GM12878 (cell line): ENCODE measurements at regions of chr3 and their contacts with region 1.

Region 1: DNA sequence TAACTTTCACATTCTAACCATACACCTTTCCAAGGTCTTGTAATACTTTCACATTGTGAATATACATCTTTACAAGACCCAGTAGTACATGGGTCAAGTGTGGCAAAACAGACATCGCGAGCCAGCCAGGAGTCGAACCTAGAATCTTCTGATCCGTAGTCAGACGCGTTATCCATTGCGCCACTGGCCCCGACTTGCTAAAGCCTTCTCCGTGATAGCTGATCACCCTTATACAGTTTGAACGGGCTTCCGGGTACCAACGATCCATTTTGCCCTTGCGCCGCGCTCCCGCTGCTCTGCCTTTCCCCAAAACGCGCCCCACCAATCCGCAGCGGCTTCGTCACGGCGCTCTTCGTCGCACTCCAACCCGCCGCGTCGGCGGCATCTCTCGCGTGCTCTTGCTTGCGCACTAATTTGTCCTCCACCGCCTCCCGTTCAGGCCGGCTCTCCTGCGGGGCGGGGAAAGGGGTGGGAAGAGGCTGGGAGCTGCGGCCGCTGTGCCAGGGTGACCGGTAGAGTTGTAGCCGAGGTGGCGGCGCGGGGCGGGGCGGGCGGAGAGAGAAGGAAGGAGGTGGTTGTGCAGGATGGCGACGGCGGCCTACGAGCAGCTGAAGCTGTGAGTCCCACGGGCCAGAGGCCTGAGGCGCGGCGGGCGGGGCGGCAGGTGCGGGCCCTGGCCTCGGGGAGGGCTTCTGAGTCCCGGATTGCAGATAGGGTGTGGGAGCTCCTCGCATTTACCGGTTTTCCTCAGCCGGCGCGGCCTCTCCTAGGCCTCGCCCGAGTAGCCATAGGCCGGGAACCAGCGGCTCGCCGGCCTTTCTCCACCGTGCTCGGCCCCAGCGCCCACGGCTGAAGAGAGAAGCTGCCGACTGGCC is at the start of gene SACM1L:
- DNase-seq: peak; percentile 99
- ATAC-seq: peak; percentile 86
- H3K4me3 ChIP-seq: peak within 1 kb of the TSS; percentile 88
- H3K27ac ChIP-seq: peak within 1 kb of the TSS; percentile 84
- H3K4me1 ChIP-seq: peaks cover 22% of the 10 kb centered on the region
- H3K27me3 ChIP-seq: no peaks in the 10 kb centered on the region
- CTCF ChIP-seq: no peak
- EP300 ChIP-seq: peak in 1 of 2 experiments; percentile 82; a peak in 1 of 4 replicates
- POLR2A ChIP-seq: peak; percentile 86
- RAD21 ChIP-seq: no peak
- polyA plus RNA-seq, gene SACM1L: 16.5 to 20.7 TPM

Region 2: DNA sequence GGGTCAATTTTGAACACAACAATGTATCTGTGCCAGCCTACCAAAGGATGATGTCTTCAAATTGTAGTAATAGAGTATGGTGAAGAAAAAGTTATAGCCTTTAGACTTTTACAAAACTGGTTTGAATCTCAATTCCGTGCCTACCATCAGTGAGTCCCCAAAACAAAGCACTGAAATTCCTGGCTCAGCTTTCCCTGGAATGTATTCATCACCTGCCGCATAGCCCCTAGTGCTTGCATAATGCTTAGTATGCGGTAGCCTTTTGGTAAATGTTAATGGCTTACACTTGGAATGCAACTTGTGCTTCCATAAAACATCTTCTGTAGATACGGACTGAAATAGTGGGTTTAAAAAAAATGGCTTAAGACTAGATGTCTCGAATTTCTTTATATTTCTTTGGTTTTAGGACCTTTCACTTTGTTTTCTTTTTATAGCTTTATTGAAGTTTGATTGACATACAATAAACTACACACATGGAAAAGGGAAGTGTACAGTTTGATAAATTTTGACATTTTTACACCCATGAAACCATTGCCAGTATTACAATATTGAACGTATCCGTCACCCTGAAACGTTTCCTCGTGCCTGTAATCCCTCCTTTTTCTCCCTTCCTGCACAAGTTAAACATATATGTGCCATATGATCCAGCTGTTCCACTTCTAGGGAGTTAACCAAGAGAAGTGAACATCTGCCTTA is 12.2 kb after region 1 on chr3:
- CTCF ChIA-PET with region 1: interaction called, 30 read pairs
- POLR2A ChIA-PET with region 1: interaction called, 10 read pairs
- RAD21 ChIA-PET with region 1: interaction called, 8 read pairs
- SMC1A ChIA-PET with region 1: interaction called, 35 read pairs
- in situ Hi-C with region 1: no loop called
- intact Hi-C with region 1: no loop called
- DNase-seq: no peak
- ATAC-seq: no peak
- H3K4me3 ChIP-seq: no peak overlapping the region
- H3K27ac ChIP-seq: no peak overlapping the region
- H3K4me1 ChIP-seq: no peaks in the 10 kb centered on the region
- H3K27me3 ChIP-seq: no peaks in the 10 kb centered on the region
- CTCF ChIP-seq: no peak
- EP300 ChIP-seq: no peak
- POLR2A ChIP-seq: no peak
- RAD21 ChIP-seq: no peak

Region 3: DNA sequence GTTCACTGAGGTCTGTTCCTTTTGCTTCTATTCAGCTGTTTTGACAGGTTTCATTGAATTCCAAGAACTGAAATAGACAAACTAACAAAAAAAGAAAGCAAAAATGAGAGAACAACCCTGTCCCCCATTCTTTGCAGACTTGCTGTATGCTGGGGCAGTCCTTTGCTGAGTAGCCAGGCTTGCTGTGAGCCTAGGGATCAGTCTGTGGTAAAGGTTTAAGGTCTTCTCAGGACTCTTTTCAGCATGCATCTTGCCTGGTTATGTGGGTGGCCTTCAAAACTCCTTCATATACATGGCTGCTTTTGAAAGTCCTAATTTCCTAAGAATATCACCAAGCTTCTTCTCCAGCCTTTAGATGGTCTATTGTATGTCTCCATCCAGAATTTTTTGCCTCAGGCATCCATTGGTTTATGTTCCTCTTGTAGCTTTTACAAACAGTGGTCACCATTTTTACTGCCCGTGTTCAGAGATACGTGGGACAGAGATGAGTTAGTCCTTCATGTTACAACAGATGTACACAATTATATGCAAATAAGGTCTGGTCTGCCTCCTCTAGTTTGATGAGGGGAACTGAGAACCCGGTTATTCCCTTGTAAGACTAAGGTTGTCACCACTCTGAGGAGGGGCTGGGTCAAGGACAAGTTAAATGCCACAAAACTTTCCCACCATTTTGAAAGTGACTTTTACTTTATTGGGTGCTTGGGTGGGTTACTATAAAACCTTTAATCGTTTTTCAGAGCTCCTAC is 41.5 kb after region 1 on chr3:
- CTCF ChIA-PET with region 1: no interaction called
- POLR2A ChIA-PET with region 1: no interaction called
- RAD21 ChIA-PET with region 1: interaction called, 3 read pairs
- SMC1A ChIA-PET with region 1: interaction called, 13 read pairs
- in situ Hi-C with region 1: no loop called
- intact Hi-C with region 1: no loop called
- DNase-seq: peak; percentile 19
- ATAC-seq: peak; percentile 95
- H3K4me3 ChIP-seq: no peak overlapping the region
- H3K27ac ChIP-seq: peak overlapping the region; percentile 1; the same call in 1 of the 2 replicates
- H3K4me1 ChIP-seq: peaks cover 8% of the 10 kb centered on the region
- H3K27me3 ChIP-seq: no peaks in the 10 kb centered on the region
- CTCF ChIP-seq: no peak
- EP300 ChIP-seq: no peak
- POLR2A ChIP-seq: no peak
- RAD21 ChIP-seq: no peak

Region 4: DNA sequence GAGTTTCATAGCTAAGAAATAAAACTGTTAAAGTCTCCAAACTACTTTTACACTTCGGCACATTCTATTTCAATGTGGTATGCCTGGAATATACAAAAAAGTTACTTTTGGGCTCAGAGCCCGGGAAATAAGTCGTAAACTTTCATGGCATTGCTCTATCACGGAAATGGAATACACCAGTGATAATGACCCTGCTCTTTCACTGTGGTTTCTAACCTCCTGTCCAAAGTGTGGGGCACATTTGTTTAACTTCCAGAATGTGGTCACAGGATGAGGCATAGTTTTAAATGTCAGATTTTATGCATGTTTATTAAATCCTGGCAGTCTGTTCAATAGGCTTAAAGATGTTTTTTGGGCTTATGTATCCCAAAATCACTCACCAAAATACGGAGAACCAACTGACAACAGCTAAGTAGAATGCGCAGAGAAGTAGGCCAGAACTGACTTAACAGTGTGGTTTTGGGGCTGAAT is 259.2 kb after region 1 on chr3:
- CTCF ChIA-PET with region 1: no interaction called
- POLR2A ChIA-PET with region 1: no interaction called
- RAD21 ChIA-PET with region 1: no interaction called
- SMC1A ChIA-PET with region 1: no interaction called
- in situ Hi-C with region 1: no loop called
- intact Hi-C with region 1: no loop called
- DNase-seq: no peak
- ATAC-seq: no peak
- H3K4me3 ChIP-seq: no peak overlapping the region
- H3K27ac ChIP-seq: no peak overlapping the region
- H3K4me1 ChIP-seq: no peaks in the 10 kb centered on the region
- H3K27me3 ChIP-seq: no peaks in the 10 kb centered on the region
- CTCF ChIP-seq: no peak
- EP300 ChIP-seq: no peak
- POLR2A ChIP-seq: no peak
- RAD21 ChIP-seq: no peak